ENCODE measurements at regions of chr7 and their contacts with region 1.

Region 1: DNA sequence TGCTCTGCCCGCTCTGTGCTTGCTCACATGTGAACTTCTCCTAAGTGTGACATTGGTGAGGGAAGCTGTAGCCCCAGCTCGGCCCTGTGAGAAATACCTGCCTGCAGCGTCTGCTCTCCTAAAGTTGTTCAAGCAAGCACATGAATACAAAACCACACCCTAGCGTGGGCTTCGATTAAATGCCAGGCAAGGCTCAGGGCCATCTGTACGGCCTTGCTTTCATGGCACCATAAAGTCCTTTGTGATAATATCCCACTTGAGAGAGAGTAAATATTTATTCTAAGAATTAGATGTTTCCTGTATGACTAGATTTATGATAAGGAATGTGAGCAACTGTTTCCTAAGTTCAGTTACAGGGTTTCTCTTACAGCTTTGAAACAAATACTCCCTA is 262.8 kb upstream of the KLF14 start:
- DNase-seq: peak; percentile 87
- ATAC-seq: peak; percentile 87
- H3K4me3 ChIP-seq: peak overlapping the region; percentile 45; the same call in 1 of the 2 replicates
- H3K27ac ChIP-seq: peak overlapping the region; percentile 84
- H3K4me1 ChIP-seq: peaks cover 46% of the 10 kb centered on the region
- H3K27me3 ChIP-seq: no peaks in the 10 kb centered on the region
- CTCF ChIP-seq: no peak

Region 2: GRCh38 chr7:130486114-130486958 is 510.5 kb before region 1 on chr7:
- CTCF ChIA-PET with region 1: no interaction called
- POLR2A ChIA-PET with region 1: no interaction called
- intact Hi-C with region 1: no loop called
- DNase-seq: peak; percentile 85
- ATAC-seq: peak; percentile 74
- H3K4me3 ChIP-seq: peak overlapping the region; percentile 76
- H3K27ac ChIP-seq: peak overlapping the region; percentile 31; the same call in 1 of the 2 replicates
- H3K4me1 ChIP-seq: peaks cover 14% of the 10 kb centered on the region
- H3K27me3 ChIP-seq: no peaks in the 10 kb centered on the region
- CTCF ChIP-seq: peak; percentile 75

Region 3: GRCh38 chr7:130912862-130913631 is 83.8 kb before region 1 on chr7:
- CTCF ChIA-PET with region 1: no interaction called
- POLR2A ChIA-PET with region 1: no interaction called
- intact Hi-C with region 1: loop called (anchors 2 kb)
- DNase-seq: peak; percentile 96
- ATAC-seq: peak; percentile 52
- H3K4me3 ChIP-seq: peak overlapping the region; percentile 92
- H3K27ac ChIP-seq: peak overlapping the region; percentile 99
- H3K4me1 ChIP-seq: peaks cover 57% of the 10 kb centered on the region
- H3K27me3 ChIP-seq: no peaks in the 10 kb centered on the region
- CTCF ChIP-seq: no peak

Region 4: DNA sequence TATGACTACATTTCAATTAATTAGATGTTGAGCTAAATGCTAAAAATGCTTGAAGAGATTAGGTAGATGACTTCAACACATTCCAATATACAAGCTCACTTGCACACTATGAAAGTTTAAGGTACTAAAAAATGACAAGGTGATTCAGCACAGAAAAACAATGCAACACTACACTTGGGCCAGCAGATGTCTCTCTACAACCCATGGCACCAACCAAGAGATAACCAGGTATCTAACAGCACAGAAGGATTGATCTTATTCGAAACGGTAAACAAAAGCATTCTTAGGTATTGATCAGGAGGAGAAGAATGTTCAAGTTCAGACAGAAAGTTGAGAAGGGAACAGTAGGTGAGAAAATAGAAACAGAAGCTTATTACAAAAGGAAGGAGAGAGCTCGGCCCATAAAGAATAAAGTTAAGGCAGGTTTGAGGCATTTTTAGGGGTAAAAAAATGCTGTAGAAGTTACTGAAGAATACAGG is 14.6 kb before region 1 on chr7:
- CTCF ChIA-PET with region 1: interaction called, 9 read pairs
- POLR2A ChIA-PET with region 1: no interaction called
- intact Hi-C with region 1: loop called (anchors 1 kb)
- DNase-seq: peak; percentile 67
- ATAC-seq: peak; percentile 85
- H3K4me3 ChIP-seq: no peak overlapping the region
- H3K27ac ChIP-seq: no peak overlapping the region
- H3K4me1 ChIP-seq: peaks cover 3% of the 10 kb centered on the region; the same call in 1 of the 2 replicates
- H3K27me3 ChIP-seq: no peaks in the 10 kb centered on the region
- CTCF ChIP-seq: peak; percentile 87

Region 5: GRCh38 chr7:131007394-131008330 is 10.8 kb after region 1 on chr7:
- CTCF ChIA-PET with region 1: interaction called, 3 read pairs
- POLR2A ChIA-PET with region 1: no interaction called
- intact Hi-C with region 1: loop called (anchors 1 kb)
- DNase-seq: peak; percentile 97
- ATAC-seq: peak; percentile 75
- H3K4me3 ChIP-seq: no peak overlapping the region
- H3K27ac ChIP-seq: peak overlapping the region; percentile 74
- H3K4me1 ChIP-seq: peaks cover 46% of the 10 kb centered on the region
- H3K27me3 ChIP-seq: no peaks in the 10 kb centered on the region
- CTCF ChIP-seq: peak; percentile 77

Region 6: GRCh38 chr7:131040467-131040932 is 43.7 kb after region 1 on chr7:
- CTCF ChIA-PET with region 1: no interaction called
- POLR2A ChIA-PET with region 1: no interaction called
- intact Hi-C with region 1: loop called (anchors 5 kb)
- DNase-seq: peak; percentile 79
- ATAC-seq: peak; percentile 88
- H3K4me3 ChIP-seq: no peak overlapping the region
- H3K27ac ChIP-seq: no peak overlapping the region
- H3K4me1 ChIP-seq: peaks cover 15% of the 10 kb centered on the region
- H3K27me3 ChIP-seq: no peaks in the 10 kb centered on the region
- CTCF ChIP-seq: peak; percentile 94

Region 7: DNA sequence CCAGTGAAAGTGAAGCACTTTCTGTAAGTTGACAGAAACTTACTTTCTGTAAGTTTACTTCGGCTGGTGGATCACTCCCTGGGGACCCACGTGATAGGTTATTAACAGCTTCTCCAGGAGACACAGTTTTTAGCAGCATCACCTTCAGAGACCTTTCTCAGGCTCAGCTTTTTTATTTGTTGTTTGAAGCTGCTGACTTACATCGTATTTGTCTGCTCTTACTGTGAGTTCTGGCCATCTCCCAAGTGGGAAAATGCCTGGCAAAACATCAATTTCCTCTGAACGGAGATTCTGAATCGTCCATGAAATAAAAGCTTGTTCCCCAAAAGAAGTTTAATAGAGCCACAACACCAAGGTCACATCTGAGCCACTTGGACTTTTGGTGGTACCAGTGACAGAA is 738.3 kb after region 1 on chr7:
- CTCF ChIA-PET with region 1: no interaction called
- POLR2A ChIA-PET with region 1: no interaction called
- intact Hi-C with region 1: no loop called
- DNase-seq: no peak
- ATAC-seq: no peak
- H3K4me3 ChIP-seq: no peak overlapping the region
- H3K27ac ChIP-seq: no peak overlapping the region
- H3K4me1 ChIP-seq: no peaks in the 10 kb centered on the region
- H3K27me3 ChIP-seq: peaks cover 60% of the 10 kb centered on the region
- CTCF ChIP-seq: no peak

Measured in PC-3 (cell line).